Activated CD4-positive, alpha-beta memory T cell treated with anti-CD3 and anti-CD28 coated beads for 36 hours (primary cell): ENCODE measurements at regions of chr1 and their contacts with region 1.

Region 1: DNA sequence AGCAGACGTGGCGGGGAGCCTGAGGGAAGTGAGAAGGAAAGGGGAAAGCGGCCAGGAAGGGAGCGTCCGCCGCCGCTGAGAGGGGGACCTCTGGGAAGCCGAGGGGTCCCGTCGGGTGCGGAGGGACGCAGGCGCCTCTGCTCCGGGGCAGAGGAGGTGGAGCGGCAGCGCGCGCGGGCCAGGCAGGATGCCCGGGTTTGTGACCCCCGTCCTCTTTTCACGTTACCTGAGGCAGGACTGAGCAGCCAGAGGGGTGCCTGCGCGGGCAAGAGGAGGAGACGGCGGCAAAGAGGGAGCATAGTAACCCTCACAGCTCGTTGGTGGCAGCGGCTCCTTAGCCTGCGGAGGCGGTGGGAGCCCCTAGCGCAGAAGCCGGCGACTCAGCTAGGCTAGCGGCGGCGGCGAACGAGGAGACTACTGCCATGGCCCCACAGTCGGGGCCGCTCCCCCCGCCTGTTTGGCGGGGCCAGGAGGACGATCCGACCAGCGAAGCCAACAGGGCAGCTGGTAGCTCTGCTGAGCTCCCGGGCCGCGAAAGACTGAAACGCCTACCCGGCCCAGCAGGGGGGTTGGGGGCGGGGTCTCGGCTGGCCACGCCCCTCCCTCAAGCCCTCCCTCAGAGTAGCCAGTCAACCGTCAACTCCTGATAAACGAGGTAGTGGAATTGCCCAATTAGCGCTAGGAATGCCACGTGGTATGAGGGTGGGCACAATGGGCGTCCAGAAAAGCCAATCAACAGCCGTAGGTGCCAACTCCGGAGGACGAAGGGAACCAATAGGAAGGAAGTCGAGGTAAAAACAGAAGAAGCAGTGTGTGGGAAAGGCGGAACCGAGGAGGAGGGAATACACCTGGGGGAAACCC is at the start of gene TESK2:
- DNase-seq: peak; percentile 98
- H3K4me3 Mint-ChIP-seq: no peak within 1 kb of the TSS
- H3K27ac Mint-ChIP-seq: no peak within 1 kb of the TSS
- H3K4me1 Mint-ChIP-seq: peaks cover 6% of the 10 kb centered on the region
- H3K27me3 Mint-ChIP-seq: no peaks in the 10 kb centered on the region
- total RNA-seq, gene TESK2: 4.6 to 6.0 TPM

Region 2: DNA sequence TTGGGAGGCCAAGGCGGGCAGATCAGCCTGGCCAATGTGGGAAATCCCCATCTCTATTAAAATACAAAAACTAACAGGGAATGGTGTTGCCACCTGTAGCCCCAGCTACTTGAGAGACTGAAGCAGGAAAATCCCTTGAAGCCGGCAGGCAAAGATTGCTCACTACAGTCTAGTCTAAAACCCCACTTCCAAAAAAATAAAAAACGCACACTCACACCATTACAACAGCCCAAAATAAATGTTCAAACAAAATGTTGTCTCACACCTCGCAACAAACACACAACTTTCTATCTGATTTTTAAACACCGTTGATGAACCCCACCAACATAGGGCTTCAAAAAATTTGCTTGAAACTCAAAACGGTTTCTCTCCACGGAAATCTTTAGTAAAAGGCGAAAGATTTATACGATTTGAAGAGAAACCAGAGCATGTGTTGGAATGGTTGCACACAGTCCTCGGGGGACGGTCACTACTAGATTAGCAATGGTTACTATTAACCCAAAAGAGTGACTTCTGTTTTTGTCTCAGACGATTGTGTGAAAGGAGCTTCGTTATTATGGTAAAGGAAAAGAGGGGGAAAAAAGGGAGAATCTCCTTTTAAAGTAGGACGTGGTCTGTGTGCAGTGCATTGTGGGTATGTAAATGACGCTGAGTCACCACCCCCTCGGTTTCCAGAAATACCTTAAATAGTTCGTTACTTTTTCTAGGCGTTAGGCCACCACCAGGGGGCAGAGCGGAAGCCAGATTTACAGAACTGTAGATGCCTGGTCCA is 759.9 kb before region 1 on chr1 and contains the start of gene RNU5D-1:
- CTCF ChIA-PET with region 1: no interaction called
- POLR2A ChIA-PET with region 1: no interaction called
- intact Hi-C with region 1: loop called (anchors 5 kb)
- DNase-seq: peak; percentile 96
- H3K4me3 Mint-ChIP-seq: peak within 1 kb of the TSS; percentile 69
- H3K27ac Mint-ChIP-seq: peak within 1 kb of the TSS; percentile 100
- H3K4me1 Mint-ChIP-seq: peaks cover 37% of the 10 kb centered on the region
- H3K27me3 Mint-ChIP-seq: peaks cover 3% of the 10 kb centered on the region
- total RNA-seq, gene RNU5D-1: not detected

Region 3: GRCh38 chr1:44835738-44836675 is 654.8 kb before region 1 on chr1:
- CTCF ChIA-PET with region 1: interaction called, 4 read pairs
- POLR2A ChIA-PET with region 1: no interaction called
- intact Hi-C with region 1: loop called (anchors 5 kb)
- DNase-seq: peak; percentile 94
- H3K4me3 Mint-ChIP-seq: no peak overlapping the region
- H3K27ac Mint-ChIP-seq: no peak overlapping the region
- H3K4me1 Mint-ChIP-seq: peaks cover 8% of the 10 kb centered on the region
- H3K27me3 Mint-ChIP-seq: peaks cover 6% of the 10 kb centered on the region

Region 4: GRCh38 chr1:45213892-45214291 is 277.0 kb before region 1 on chr1:
- CTCF ChIA-PET with region 1: no interaction called
- POLR2A ChIA-PET with region 1: no interaction called
- intact Hi-C with region 1: no loop called
- DNase-seq: no peak
- H3K4me3 Mint-ChIP-seq: no peak overlapping the region
- H3K27ac Mint-ChIP-seq: no peak overlapping the region
- H3K4me1 Mint-ChIP-seq: peaks cover 3% of the 10 kb centered on the region
- H3K27me3 Mint-ChIP-seq: peaks cover 4% of the 10 kb centered on the region

Region 5: DNA sequence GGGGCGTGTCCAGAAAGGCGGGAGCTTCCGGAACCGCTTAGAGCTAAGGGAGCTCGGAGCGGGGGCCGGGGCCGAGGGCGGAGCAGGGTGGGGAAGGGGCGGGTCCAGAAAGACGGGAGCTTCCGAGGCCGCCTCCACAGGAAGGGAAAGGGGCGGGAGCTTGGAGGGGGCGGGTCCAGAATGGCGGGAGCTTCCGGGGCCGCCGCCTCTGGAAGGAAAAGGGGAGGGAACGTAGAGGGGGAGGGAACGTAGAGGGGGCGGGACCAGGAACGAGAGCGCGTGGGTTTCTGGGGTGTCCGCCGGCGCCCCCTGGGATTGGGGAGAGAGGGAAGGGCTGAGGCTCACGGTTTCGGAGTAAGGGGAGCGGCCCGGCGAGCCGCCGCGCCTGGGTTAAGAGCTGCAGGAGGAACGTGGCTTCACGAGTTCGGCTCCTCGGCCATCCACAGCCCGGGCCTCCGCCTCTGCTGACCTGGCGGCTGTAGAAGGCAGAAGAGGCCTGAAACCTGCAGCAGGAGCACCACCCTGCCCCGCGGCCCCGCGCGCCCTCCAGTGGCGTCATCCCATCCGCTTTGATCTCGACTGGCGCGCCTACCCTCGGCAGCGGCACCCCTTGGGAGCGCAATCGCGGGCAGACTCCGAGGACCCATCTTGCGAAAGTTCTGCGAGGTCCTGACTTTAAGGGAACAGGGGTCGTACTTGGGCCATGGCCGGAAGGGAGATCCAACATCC is 187.1 kb before region 1 on chr1:
- CTCF ChIA-PET with region 1: interaction called, 22 read pairs
- POLR2A ChIA-PET with region 1: interaction called, 3 read pairs
- intact Hi-C with region 1: loop called (anchors 1 kb)
- DNase-seq: peak; percentile 100
- H3K4me3 Mint-ChIP-seq: peak overlapping the region; percentile 89
- H3K27ac Mint-ChIP-seq: peak overlapping the region; percentile 96
- H3K4me1 Mint-ChIP-seq: peaks cover 29% of the 10 kb centered on the region
- H3K27me3 Mint-ChIP-seq: no peaks in the 10 kb centered on the region

Region 6: DNA sequence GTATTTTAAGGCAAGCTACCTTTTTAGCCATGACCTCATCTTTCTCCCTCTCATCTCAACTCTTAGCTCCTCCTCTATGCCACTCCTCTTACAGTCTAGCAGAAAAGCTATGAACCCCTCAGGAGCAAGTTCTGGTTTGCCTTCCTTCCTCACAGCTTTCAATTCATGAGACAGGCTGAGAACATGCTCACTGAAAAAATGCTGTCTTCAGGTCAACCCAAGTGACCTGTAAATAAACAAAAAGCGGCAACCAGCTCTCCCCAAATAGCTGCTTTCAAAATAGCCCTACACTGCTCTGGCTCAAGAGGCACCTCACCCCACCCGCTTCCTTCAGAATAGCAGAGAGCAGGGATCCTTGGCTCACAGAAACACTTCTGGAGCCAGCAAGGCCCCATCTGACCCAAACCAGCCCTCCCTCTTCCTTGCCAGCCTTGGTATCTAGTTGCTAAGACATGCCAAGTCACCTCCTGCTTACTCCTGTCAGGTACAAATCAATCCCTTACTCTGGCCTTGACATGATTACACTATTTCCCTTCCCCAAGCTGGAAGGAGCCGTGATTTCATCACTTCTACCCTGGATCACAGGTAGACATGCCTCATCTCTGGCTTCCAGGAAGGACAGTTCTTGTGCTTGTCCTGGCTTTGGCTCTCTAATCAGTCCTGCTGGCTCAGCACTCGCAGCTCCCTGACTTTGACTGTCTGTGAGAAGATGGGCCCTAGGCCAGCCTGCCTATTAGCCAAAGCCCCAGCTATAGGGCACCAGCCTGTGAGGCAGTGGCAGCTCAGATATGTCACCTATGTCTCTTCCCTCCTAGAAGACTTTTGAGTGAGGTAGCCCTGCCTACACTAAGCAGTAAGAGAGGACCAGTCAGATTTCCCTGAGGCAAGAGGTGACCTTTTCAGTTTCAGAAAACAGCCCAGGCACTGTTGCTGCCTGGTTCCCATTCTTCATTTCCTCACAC is 141.9 kb before region 1 on chr1:
- CTCF ChIA-PET with region 1: interaction called, 22 read pairs
- POLR2A ChIA-PET with region 1: interaction called, 6 read pairs
- intact Hi-C with region 1: no loop called
- DNase-seq: no peak
- H3K4me3 Mint-ChIP-seq: no peak overlapping the region
- H3K27ac Mint-ChIP-seq: no peak overlapping the region
- H3K4me1 Mint-ChIP-seq: peaks cover 7% of the 10 kb centered on the region
- H3K27me3 Mint-ChIP-seq: no peaks in the 10 kb centered on the region

Region 7: GRCh38 chr1:45373573-45373972 is 117.3 kb before region 1 on chr1:
- CTCF ChIA-PET with region 1: interaction called, 11 read pairs
- POLR2A ChIA-PET with region 1: no interaction called
- intact Hi-C with region 1: no loop called
- DNase-seq: no peak
- H3K4me3 Mint-ChIP-seq: no peak overlapping the region
- H3K27ac Mint-ChIP-seq: no peak overlapping the region
- H3K4me1 Mint-ChIP-seq: peaks cover 2% of the 10 kb centered on the region
- H3K27me3 Mint-ChIP-seq: no peaks in the 10 kb centered on the region

Region 8: DNA sequence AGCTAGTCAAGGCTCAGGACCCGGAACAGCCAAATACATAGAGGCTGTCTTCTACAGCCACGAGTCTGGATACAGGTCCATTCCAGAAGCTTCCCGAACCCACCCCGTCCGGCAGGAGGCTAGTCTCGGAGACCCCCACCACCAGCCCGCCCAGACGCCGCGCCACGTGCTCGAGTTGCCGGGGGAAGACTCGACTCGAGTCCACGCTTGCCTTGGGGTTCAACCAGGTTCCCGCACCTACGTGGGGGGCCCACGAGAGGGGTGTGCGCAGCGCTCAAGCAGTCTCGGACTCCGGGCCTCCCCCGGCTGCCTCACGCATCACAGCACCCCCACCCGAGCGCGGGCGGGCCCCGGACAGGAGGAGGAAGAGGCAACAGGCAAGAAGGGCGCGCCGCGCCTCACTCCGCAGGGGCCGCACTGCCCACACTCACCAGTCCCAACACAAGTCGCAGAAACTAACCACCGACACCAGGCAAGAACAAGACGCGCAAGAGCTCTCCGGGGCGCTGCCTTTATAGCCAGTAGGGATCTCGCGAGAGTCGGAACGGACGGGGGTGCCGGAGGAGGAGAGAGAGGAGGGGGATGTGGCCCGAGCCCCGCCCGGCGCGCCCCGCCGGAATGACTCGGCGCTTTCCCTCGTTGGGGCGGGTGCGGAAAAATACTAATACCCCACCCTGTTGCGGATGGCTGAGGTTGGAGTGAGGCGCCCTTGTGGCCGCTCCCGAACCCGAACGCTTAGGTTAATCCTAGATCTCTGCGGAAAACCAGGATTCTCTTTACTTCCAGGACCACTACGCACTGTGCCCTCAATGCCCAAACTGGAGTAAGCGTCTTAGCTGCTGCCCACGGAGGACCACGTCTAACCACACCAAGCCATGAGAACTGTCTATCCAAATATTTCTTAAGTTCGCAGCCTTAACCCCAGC is 30.8 kb after region 1 on chr1 and contains the start of gene PRDX1:
- CTCF ChIA-PET with region 1: interaction called, 5 read pairs
- POLR2A ChIA-PET with region 1: interaction called, 14 read pairs
- intact Hi-C with region 1: loop called (anchors 2 kb)
- DNase-seq: peak; percentile 98
- H3K4me3 Mint-ChIP-seq: peak within 1 kb of the TSS; percentile 94
- H3K27ac Mint-ChIP-seq: peak within 1 kb of the TSS; percentile 94
- H3K4me1 Mint-ChIP-seq: peaks cover 43% of the 10 kb centered on the region
- H3K27me3 Mint-ChIP-seq: peaks cover 1% of the 10 kb centered on the region
- total RNA-seq, gene PRDX1: 479 to 481 TPM